Activated CD4-positive, alpha-beta T cell treated with anti-CD3 and anti-CD28 coated beads, Interleukin-2, amount 10 ng/mL, durations not matched to agents 24 days and 14 days (primary cell): ENCODE measurements at regions of chr2 and their contacts with region 1.

Region 1: GRCh38 chr2:152505495-152505906 is 170.5 kb downstream of the FMNL2 start:
- DNase-seq: no peak
- H3K4me3 Mint-ChIP-seq: no peak overlapping the region
- H3K27ac Mint-ChIP-seq: no peak overlapping the region
- H3K4me1 Mint-ChIP-seq: peaks cover 9% of the 10 kb centered on the region
- H3K27me3 Mint-ChIP-seq: no peaks in the 10 kb centered on the region

Region 2: DNA sequence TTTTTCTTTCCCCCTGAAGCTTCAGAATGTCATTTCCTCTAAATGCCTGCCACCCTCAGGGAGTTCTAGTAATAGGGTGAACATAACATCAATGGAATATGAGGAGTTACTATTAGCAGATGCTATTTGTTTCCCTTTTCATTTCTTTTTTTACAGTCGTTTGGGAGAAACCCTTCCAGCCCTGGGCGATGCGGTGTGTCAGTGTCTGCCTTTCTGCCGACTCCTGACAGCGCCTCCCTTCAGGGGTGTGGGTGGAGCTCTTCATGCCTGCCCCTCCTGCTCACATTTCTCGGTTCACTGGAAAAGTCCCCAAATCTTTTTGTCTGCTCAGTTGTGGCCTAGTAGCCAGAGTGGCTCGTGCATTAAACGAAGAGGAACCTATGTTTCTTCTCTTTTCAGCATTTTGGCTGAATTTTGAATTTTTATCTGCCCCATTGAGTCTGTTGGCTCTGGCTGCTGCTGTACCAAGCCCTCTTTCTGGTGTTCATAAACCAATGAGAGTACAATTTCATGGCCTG is 98.2 kb before region 1 on chr2:
- intact Hi-C with region 1: loop called (anchors 5 kb)
- DNase-seq: peak; percentile 81
- H3K4me3 Mint-ChIP-seq: peak overlapping the region; percentile 78
- H3K27ac Mint-ChIP-seq: peak overlapping the region; percentile 91
- H3K4me1 Mint-ChIP-seq: peaks cover 54% of the 10 kb centered on the region
- H3K27me3 Mint-ChIP-seq: no peaks in the 10 kb centered on the region

Region 3: DNA sequence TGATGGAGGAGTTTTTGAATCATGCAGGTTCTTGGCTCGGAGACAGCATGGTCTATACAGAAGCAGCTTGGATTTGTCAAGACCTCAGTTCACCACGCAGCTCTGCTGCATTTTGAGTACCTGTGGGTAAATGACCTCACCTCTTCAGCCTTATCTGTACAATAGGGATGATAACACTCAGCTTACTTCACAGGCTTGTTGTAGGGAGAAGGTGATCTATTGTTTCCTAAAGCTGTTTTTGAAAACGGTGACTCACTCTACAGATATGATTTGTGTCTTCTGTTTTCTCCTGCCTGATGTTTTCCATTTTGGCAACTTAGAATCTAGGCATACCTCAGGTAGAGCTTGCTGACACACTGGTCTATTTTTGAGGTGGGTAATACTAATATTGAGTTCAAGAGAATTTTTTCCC is 90.3 kb before region 1 on chr2:
- intact Hi-C with region 1: loop called (anchors 2 kb)
- DNase-seq: peak; percentile 59
- H3K4me3 Mint-ChIP-seq: peak overlapping the region; percentile 24
- H3K27ac Mint-ChIP-seq: peak overlapping the region; percentile 87
- H3K4me1 Mint-ChIP-seq: peaks cover 31% of the 10 kb centered on the region
- H3K27me3 Mint-ChIP-seq: no peaks in the 10 kb centered on the region

Region 4: DNA sequence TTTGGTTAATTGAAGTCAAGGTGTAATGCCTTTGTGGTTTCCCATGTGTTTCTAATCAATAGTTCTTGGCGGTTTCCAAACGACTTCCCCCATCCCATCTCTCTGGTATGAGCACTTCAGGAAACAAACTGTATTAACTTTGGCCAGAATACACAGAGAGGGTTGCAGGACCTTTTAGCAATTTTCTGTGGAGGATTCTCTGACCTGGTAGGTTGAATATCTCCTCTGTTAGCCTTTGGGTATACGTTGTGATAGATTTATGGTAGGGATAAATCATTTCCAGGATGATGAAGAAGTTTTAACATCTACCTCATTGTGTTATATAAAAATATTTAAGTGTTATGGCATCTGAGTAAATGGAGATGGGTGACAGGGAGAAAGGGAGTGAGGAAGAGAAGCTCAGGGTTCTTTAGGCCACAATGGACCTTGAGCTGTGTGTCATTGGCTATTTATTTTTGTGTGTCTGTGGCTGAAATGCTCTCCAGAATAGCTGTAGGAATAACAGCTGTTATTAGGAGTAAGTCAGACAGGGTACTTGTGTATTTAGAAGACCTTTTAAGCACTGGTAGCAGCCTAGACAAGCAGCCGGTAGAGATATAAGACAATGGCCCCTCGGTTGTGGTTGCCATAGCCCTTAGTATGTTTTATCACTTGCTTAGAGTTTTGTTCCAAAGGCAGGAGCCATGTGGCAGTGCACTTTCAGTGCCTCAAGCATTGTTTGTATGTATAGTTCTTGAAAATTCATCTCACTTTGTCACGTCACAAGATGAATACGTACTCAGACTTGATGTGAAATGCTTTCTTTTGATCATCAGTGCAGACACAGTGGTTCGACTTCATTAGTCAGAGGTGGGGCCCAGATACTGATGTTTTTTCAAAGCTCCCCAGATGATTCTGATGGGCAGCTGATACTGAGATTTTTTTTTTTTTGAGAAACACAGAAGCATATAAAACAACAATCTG is 79.5 kb before region 1 on chr2:
- intact Hi-C with region 1: no loop called
- DNase-seq: no peak
- H3K4me3 Mint-ChIP-seq: no peak overlapping the region
- H3K27ac Mint-ChIP-seq: no peak overlapping the region
- H3K4me1 Mint-ChIP-seq: peaks cover 7% of the 10 kb centered on the region
- H3K27me3 Mint-ChIP-seq: peaks cover 1% of the 10 kb centered on the region